ENCODE measurements at regions of chr22 and their contacts with region 1.

Region 1: DNA sequence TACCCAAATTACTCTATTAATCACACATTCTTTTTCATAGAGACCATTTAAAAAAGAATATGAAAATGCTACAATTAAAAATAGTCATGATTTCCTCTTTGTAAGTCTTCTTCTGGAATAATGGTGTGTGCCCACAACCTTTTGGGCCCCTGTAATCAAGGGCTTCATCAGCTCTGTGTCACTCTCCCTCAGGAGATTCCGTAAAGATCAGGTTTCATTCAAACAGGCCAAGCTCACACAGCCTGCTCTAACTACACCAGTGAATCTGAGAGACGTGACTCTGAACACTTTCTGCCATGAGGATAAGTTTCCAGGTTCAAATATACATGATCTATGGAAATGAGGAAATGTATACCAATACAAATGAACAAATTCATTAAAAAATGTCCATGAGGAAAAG is 9.5 kb downstream of the DRICH1 start:
- DNase-seq: no peak
- ATAC-seq: no peak
- H3K4me3 ChIP-seq: no peak overlapping the region
- H3K27ac ChIP-seq: no peak overlapping the region
- H3K4me1 ChIP-seq: no peaks in the 10 kb centered on the region
- H3K27me3 ChIP-seq: no peaks in the 10 kb centered on the region
- CTCF ChIP-seq: no peak

Region 2: GRCh38 chr22:23849009-23850006 is 226.7 kb after region 1 on chr22:
- CTCF ChIA-PET with region 1: no interaction called
- POLR2A ChIA-PET with region 1: no interaction called
- in situ Hi-C with region 1: no loop called
- intact Hi-C with region 1: loop called (anchors 10 kb)
- DNase-seq: no peak
- ATAC-seq: peak; percentile 91
- H3K4me3 ChIP-seq: peak overlapping the region; percentile 32 to 47
- H3K27ac ChIP-seq: no peak overlapping the region
- H3K4me1 ChIP-seq: no peaks in the 10 kb centered on the region; the same call in none of the 2 replicates
- H3K27me3 ChIP-seq: no peaks in the 10 kb centered on the region
- CTCF ChIP-seq: peak; percentile 94